ENCODE measurements at regions of chr1 and their contacts with region 1.

Region 1: GRCh38 chr1:225228841-225229303 is 199.0 kb downstream of the LBR start:
- DNase-seq: no peak
- ATAC-seq: no peak
- H3K4me3 ChIP-seq: no peak overlapping the region
- H3K4me3 Mint-ChIP-seq: no peak overlapping the region
- H3K27ac ChIP-seq: no peak overlapping the region
- H3K27ac Mint-ChIP-seq: no peak overlapping the region
- H3K4me1 ChIP-seq: no peaks in the 10 kb centered on the region
- H3K4me1 Mint-ChIP-seq: no peaks in the 10 kb centered on the region
- H3K27me3 ChIP-seq: no peaks in the 10 kb centered on the region
- H3K27me3 Mint-ChIP-seq: peaks cover 2% of the 10 kb centered on the region
- CTCF ChIP-seq: no peak

Region 2: DNA sequence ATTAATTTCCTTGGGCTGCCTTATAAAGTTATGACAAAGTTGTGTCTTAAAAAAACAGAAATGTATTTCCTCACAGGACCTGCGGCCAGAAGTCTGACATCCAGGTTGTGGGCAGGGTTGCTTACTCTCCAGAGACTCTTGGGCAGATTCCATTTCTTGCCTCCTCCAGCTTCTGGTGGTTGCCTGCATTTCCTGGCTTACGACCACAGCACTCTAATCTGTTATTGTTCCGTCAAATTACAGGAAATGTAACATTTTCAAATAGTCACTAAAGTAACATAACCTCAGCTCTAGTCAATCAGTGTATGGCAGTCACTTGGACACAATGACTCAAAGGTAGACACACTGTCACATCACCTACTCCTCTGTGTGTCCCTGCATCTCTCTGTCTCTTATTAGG is 72.6 kb before region 1 on chr1:
- CTCF ChIA-PET with region 1: no interaction called
- POLR2A ChIA-PET with region 1: no interaction called
- intact Hi-C with region 1: loop called in 1 of 2 experiments (anchors 2 kb)
- DNase-seq: no peak
- ATAC-seq: no peak
- H3K4me3 ChIP-seq: no peak overlapping the region
- H3K4me3 Mint-ChIP-seq: peak overlapping the region; percentile 10
- H3K27ac ChIP-seq: no peak overlapping the region
- H3K27ac Mint-ChIP-seq: no peak overlapping the region
- H3K4me1 ChIP-seq: no peaks in the 10 kb centered on the region
- H3K4me1 Mint-ChIP-seq: peaks cover 11% of the 10 kb centered on the region
- H3K27me3 ChIP-seq: no peaks in the 10 kb centered on the region
- H3K27me3 Mint-ChIP-seq: no peaks in the 10 kb centered on the region
- CTCF ChIP-seq: no peak